Activated B cell treated with CpG ODN at 0.5 μM for 24 hours (primary cell): ENCODE measurements at regions of chr20 and their contacts with region 1.

Region 1: DNA sequence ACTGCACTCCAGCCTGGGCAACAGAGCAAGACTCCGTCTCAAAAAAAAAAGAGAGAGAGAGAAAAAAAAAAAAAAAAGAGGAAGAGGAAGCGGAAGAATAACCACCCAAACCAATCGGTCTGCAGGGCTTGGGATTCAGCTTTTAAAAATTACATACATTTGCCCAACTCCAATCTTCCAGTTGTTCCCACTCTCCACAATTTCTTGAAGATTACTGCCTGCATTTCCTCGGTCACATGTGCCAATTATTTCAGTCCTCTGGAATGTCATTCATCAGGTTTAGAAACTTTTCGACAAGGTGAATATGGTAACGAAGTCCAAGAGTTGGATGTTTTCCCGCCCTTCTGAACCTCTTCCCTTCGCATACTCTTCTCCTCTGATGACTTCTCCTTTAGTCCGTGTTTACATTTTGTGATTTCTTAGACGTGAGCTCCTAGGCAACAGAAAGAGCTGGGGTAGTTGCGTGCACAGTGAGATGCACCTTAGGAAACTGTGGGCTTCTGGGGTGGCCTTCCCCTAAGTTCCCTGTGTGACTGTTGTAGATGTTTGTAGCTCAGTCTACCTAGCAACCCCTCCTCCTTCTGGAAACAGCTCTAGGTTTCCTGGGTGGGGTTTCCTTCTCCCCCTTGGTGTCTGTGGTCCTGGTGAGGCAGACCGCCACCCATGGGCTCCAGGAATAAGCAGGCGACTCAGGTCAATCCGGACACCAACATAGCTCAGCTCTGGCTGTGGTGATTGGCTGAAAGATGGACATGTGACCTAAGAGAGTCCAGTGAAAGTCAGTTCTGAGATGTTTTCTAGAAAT is 62.9 kb upstream of the NCOA3 start:
- DNase-seq: peak; percentile 30
- ATAC-seq: peak; percentile 68
- H3K4me3 Mint-ChIP-seq: peak overlapping the region; percentile 42
- H3K27ac Mint-ChIP-seq: peak overlapping the region; percentile 91
- H3K4me1 Mint-ChIP-seq: peaks cover 52% of the 10 kb centered on the region
- H3K27me3 Mint-ChIP-seq: no peaks in the 10 kb centered on the region
- CTCF ChIP-seq: no peak

Region 2: GRCh38 chr20:47356526-47357295 is 82.1 kb before region 1 on chr20 and contains the start of gene ZMYND8:
- CTCF ChIA-PET with region 1: no interaction called
- POLR2A ChIA-PET with region 1: interaction called, 25 read pairs
- intact Hi-C with region 1: no loop called
- DNase-seq: peak; percentile 96
- ATAC-seq: peak; percentile 81
- H3K4me3 Mint-ChIP-seq: no peak within 1 kb of the TSS
- H3K27ac Mint-ChIP-seq: no peak within 1 kb of the TSS
- H3K4me1 Mint-ChIP-seq: peaks cover 55% of the 10 kb centered on the region
- H3K27me3 Mint-ChIP-seq: no peaks in the 10 kb centered on the region
- CTCF ChIP-seq: no peak
- total RNA-seq, gene ZMYND8: 42.6 and 44.7 TPM in 2 replicates

Region 3: DNA sequence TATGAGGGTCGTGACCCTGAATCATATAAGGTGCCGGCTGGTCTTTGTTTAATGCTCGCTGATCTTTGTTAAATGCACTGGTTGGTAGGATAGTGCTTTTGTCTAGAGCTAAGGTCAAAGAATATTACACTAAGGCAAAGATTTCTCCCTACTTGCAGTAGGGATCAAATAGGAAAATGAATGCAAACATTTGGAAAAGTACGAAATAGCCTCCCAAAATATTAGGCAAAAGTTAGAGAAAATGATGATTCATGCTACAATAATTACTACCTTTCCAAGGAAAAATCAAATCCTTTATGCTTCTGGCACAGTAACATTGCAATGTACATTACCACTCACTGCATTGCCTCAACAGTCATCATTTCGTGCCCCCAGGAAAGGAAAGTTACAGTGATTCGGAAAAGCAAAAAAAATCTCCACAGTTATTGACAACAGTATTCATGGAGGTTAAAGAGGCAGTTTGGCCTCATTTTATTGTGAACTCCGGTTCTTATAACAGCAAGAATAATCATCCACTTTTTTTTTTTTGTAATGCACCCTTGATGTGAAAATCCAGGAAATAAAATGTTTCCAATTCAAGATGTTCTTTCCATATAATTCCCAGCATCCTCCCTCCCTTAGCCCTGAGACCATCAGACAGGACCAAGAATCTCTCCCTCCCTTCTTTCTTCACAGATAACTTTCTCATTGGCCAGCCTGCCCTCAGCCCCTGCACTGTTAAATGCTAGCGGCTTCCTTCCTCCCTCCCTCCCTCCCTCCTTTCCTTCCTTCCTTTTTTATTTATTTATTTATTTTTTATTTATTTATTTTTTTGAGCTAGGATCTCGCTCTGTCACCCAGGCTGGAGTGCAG is 20.5 kb before region 1 on chr20:
- CTCF ChIA-PET with region 1: no interaction called
- POLR2A ChIA-PET with region 1: interaction called, 203 read pairs
- intact Hi-C with region 1: loop called (anchors 1 kb)
- DNase-seq: no peak
- ATAC-seq: no peak
- H3K4me3 Mint-ChIP-seq: no peak overlapping the region
- H3K27ac Mint-ChIP-seq: peak overlapping the region; percentile 100
- H3K4me1 Mint-ChIP-seq: peaks cover 73% of the 10 kb centered on the region
- H3K27me3 Mint-ChIP-seq: no peaks in the 10 kb centered on the region
- CTCF ChIP-seq: no peak

Region 4: DNA sequence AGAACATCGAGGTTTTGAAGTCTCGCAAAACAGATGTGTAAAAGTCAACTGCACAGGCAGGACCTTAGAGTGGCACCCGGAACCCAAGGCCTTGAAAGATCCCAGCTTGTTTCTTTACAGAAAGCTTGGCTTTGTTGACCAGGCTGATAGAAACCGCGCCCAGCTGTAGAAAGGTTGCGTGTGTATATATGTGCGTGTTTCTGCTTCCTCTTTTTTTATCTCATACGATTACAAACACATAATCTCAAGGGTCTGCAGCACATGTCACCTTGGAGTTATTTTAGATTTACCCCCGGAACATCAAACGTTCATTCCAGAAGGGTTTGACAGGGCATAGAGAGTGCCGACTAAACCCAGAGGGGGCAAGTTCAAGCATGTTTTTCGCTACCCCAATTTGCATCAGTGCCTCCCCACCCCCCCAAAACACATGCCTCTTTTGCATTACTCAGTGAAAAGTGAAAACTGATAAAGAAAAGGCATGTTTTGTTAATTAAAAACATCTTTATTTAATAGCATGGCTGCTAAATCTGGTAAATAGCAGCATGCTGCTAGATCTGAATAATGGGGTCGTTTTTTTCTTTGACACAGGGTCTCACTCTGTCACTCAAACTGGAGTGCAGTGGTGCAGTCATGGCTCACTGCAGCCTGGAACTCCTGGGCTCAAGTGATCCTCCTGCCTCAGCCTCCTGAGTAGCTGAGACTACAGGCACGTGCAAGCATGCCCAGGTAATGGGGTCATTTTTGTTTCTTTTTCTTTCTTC is 29.7 kb after region 1 on chr20:
- CTCF ChIA-PET with region 1: no interaction called
- POLR2A ChIA-PET with region 1: interaction called, 17 read pairs
- intact Hi-C with region 1: loop called (anchors 1 kb)
- DNase-seq: peak; percentile 35
- ATAC-seq: peak; percentile 80
- H3K4me3 Mint-ChIP-seq: peak overlapping the region; percentile 50
- H3K27ac Mint-ChIP-seq: peak overlapping the region; percentile 94
- H3K4me1 Mint-ChIP-seq: peaks cover 64% of the 10 kb centered on the region
- H3K27me3 Mint-ChIP-seq: no peaks in the 10 kb centered on the region
- CTCF ChIP-seq: no peak

Region 5: GRCh38 chr20:47544240-47544639 is 105.5 kb after region 1 on chr20:
- CTCF ChIA-PET with region 1: no interaction called
- POLR2A ChIA-PET with region 1: no interaction called
- intact Hi-C with region 1: no loop called
- DNase-seq: no peak
- ATAC-seq: peak; percentile 56
- H3K4me3 Mint-ChIP-seq: no peak overlapping the region
- H3K27ac Mint-ChIP-seq: peak overlapping the region; percentile 2
- H3K4me1 Mint-ChIP-seq: peaks cover 82% of the 10 kb centered on the region
- H3K27me3 Mint-ChIP-seq: no peaks in the 10 kb centered on the region
- CTCF ChIP-seq: no peak

Region 6: DNA sequence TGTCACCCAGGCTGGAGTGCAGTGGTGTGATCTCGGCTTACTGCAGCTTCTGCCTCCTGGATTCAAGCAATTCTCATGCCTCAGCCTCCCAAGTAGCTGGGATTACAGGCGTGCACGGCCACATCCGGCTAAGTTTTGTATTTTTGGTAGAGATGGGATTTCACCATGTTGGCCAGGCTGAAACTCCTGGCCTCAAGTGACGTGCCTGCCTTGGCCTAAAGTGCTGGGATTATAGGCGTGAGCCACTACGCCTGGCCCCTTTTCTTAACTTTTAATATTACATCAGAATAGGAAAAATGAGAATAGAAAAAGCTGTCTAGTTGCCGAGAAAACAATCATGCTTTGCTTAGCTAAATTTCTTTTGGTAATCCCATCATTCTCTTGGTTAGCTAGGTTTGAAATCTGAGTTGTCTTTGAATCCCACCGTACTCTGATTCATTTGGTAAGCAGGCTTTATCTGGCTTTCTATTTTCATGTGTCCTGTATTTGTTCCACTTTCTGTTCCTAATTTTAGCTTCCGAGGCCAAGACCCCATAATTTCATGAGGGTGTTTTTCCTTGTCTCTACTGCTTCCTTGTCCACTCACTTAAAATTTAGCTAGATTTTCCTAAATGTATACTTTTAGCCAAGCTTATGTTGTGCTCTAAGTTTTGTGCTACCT is 146.4 kb after region 1 on chr20:
- CTCF ChIA-PET with region 1: no interaction called
- POLR2A ChIA-PET with region 1: interaction called, 10 read pairs
- intact Hi-C with region 1: no loop called
- DNase-seq: no peak
- ATAC-seq: peak; percentile 27
- H3K4me3 Mint-ChIP-seq: no peak overlapping the region
- H3K27ac Mint-ChIP-seq: peak overlapping the region; percentile 30
- H3K4me1 Mint-ChIP-seq: peaks cover 61% of the 10 kb centered on the region
- H3K27me3 Mint-ChIP-seq: no peaks in the 10 kb centered on the region
- CTCF ChIP-seq: no peak